Right lobe of liver (tissue), 6 donors: ENCODE measurements at regions of chr17 and their contacts with region 1.

Region 1: GRCh38 chr17:76091526-76092285 is 11.9 kb downstream of the EXOC7 start:
- DNase-seq: peak in 1 of 3 donors; percentile 46
- ATAC-seq: no peak
- H3K4me3 ChIP-seq: no peak overlapping the region
- H3K27ac ChIP-seq: no peak overlapping the region
- H3K4me1 ChIP-seq: no peaks in the 10 kb centered on the region
- H3K27me3 ChIP-seq: no peaks in the 10 kb centered on the region
- CTCF ChIP-seq: no peak
- POLR2A ChIP-seq: no peak

Region 2: GRCh38 chr17:75904749-75905521 is 186.8 kb before region 1 on chr17 and contains the start of gene MRPL38:
- intact Hi-C with region 1: no loop called
- DNase-seq: peak; percentile 96 to 98 (median 97)
- ATAC-seq: peak; percentile 94 to 98 (median 96)
- H3K4me3 ChIP-seq: peak within 1 kb of the TSS; percentile 71 to 96 (median 96)
- H3K27ac ChIP-seq: peak within 1 kb of the TSS; percentile 72 to 86 (median 84)
- H3K4me1 ChIP-seq: peaks cover 0 to 26% (median 4%) of the 10 kb centered on the region in 4 donors
- H3K27me3 ChIP-seq: no peaks in the 10 kb centered on the region
- CTCF ChIP-seq: peak; percentile 99 to 100 (median 100)
- POLR2A ChIP-seq: peak; percentile 65
- total RNA-seq, gene MRPL38: 46.1 to 79.8 (median 57.3) TPM

Region 3: DNA sequence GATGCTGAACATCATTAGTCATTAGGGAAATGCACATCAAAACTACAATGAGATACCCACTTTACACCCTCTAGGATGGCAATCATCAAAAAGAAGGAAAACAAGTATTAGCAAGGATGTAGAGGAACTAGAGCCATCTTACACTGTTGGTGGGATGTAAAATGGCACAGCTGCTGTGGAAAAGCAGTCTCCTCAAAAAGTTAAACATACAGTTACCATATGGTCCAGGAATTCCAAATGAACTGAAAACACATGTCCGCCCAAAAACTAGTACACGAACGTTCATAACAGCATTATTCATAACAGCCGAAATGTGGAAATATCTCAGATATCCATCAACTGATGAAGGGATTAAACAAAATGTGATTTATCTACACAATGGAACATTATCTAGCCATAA is 157.9 kb before region 1 on chr17:
- intact Hi-C with region 1: no loop called
- DNase-seq: no peak
- ATAC-seq: no peak
- H3K4me3 ChIP-seq: no peak overlapping the region
- H3K27ac ChIP-seq: no peak overlapping the region
- H3K4me1 ChIP-seq: no peaks in the 10 kb centered on the region
- H3K27me3 ChIP-seq: no peaks in the 10 kb centered on the region
- CTCF ChIP-seq: no peak
- POLR2A ChIP-seq: no peak

Region 4: DNA sequence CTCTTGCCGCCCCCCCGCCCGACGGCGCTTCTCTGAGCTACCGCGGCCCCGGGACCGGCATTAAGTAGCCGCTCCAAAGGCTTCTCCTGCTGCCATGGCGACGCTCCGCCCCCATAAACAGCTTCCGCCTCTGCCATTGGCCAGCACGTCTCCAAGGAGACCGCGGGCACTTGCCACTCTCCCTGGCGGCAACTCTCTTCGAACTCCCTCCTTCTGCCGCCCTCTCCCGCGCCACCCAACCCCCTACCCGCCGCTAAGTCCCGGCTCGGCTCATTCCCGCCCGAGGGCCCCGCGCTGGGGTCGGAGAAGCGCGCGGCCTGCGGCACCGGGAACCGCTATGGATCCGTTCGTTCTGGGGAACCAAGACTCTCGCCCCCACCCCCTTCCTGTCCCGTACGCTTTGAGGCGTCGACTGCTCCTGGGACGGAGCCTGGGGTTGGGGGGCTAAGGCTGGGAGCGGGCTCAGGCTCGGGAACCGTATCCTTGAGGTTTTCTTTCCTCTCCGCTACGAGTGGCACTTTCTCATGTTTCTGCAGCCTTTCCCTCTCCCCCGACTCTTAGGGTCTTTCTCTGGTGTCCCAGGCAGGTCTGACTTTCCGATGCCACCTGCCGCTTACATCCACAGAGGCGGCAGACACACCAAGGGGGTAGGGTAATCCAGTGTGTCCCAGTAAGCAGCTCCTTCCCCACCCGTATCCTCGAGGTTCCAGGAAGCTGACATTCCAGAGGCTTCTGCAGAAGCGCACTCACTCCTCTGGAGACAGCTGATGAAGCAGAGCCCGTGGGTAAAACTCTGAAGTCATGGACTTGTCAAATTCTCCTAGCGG is 49.7 kb after region 1 on chr17 and contains the start of gene FOXJ1:
- intact Hi-C with region 1: loop called in 1 of 2 experiments (anchors 5 kb)
- DNase-seq: peak; percentile 84 to 92 (median 91)
- ATAC-seq: peak; percentile 85 to 94 (median 92)
- H3K4me3 ChIP-seq: peak within 1 kb of the TSS; percentile 37 to 44 (median 40)
- H3K27ac ChIP-seq: no peak within 1 kb of the TSS
- H3K4me1 ChIP-seq: peaks cover 0 to 10% (median 4%) of the 10 kb centered on the region in 4 donors
- H3K27me3 ChIP-seq: peaks cover 0 to 9% of the 10 kb centered on the region in 2 donors
- CTCF ChIP-seq: no peak
- POLR2A ChIP-seq: no peak
- total RNA-seq, gene FOXJ1: 0.06 to 0.12 (median 0.11) TPM in 3 of 6 experiments, not detected in the others

Region 5: DNA sequence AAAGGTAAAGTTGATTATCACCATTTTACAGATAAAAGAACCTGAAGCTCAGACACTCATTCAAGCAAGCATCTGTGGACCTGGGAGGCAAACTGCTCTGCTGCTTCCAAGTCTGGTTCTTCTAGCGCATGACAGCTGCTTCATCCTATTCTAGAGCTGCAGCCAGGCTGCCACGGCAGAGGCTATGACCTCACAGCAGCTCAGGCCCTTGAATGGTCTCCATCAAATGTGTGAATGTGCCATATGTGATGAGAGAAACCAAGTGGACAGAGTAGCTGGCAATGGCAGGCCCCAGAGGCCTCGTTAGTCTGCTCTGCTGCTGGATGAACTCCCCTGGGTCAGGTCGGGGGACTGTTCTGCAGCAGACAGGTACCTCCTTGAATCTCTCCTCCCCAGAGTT is 80.0 kb after region 1 on chr17:
- intact Hi-C with region 1: no loop called
- DNase-seq: no peak
- ATAC-seq: no peak
- H3K4me3 ChIP-seq: no peak overlapping the region
- H3K27ac ChIP-seq: no peak overlapping the region
- H3K4me1 ChIP-seq: no peaks in the 10 kb centered on the region
- H3K27me3 ChIP-seq: no peaks in the 10 kb centered on the region
- CTCF ChIP-seq: no peak
- POLR2A ChIP-seq: no peak